MCF 10A (cell line): ENCODE measurements at regions of chr5 and their contacts with region 1.

Region 1: DNA sequence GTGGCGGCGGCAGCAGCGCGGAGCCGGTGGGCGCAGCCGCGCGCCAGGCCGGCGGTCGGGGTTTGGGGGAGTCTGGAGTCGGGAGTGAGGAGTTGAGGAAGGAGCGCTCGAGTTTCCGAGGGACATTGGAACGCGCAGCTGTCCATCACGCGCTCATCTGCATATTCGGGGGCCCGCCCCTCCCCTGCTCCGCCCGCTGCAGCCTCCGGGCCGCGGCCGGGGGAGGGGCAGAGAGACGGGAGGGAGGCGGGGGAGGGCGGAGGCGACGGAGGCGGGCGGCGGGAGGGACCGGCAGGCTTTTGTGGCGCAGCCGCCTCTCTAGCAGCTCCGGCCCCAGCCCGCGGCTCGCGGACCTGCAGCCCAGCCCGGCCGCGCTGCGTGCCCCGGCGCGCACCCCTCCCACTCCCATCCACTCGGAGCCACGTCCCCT is at the start of gene IRX2:
- DNase-seq: peak; percentile 97
- H3K4me3 Mint-ChIP-seq: peak within 1 kb of the TSS; percentile 82
- H3K27ac Mint-ChIP-seq: peak within 1 kb of the TSS; percentile 95
- H3K4me1 Mint-ChIP-seq: peaks cover 12% of the 10 kb centered on the region
- H3K27me3 Mint-ChIP-seq: no peaks in the 10 kb centered on the region
- CTCF ChIP-seq: no peak
- total RNA-seq, gene IRX2: 35.4 and 43.4 TPM in 2 replicates

Region 2: DNA sequence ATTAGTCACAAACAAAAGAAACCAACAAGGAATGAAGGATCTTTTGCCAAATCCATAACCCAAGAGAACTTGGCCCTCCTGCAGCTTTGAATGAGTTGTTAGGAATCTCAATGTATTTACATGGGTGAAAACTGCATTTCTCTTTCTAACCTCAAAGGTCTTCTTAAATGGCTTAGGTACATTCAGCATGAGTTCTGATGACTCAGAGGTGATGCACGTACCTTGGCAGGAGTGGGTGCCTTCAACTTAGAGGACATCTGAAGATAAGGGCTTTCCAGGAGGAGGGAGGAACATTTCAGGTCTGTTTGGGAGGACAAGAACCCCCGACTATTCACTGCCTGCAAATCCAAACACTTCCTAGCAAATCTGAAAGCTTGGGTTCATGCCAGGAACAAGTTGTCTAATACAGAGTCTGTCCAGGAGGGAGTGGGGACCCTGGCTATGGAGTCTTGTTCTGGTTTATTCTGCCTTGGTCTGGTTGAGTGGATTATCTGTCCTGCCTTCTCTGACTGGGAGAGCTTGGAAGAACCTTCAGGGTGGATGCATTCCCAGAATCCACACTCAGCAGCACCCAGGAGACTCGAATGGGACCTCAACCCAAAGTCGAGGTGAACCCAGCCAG is 65.8 kb before region 1 on chr5:
- CTCF ChIA-PET with region 1: interaction called, 3 read pairs
- POLR2A ChIA-PET with region 1: interaction called, 27 read pairs
- intact Hi-C with region 1: loop called (anchors 5 kb)
- DNase-seq: peak; percentile 96
- H3K4me3 Mint-ChIP-seq: peak overlapping the region; percentile 57
- H3K27ac Mint-ChIP-seq: peak overlapping the region; percentile 92
- H3K4me1 Mint-ChIP-seq: peaks cover 51% of the 10 kb centered on the region
- H3K27me3 Mint-ChIP-seq: no peaks in the 10 kb centered on the region
- CTCF ChIP-seq: no peak

Region 3: GRCh38 chr5:2780394-2781171 is 29.0 kb after region 1 on chr5:
- CTCF ChIA-PET with region 1: interaction called, 4 read pairs
- POLR2A ChIA-PET with region 1: interaction called, 6 read pairs
- intact Hi-C with region 1: loop called (anchors 1 kb)
- DNase-seq: peak; percentile 84
- H3K4me3 Mint-ChIP-seq: no peak overlapping the region
- H3K27ac Mint-ChIP-seq: no peak overlapping the region
- H3K4me1 Mint-ChIP-seq: peaks cover 10% of the 10 kb centered on the region
- H3K27me3 Mint-ChIP-seq: no peaks in the 10 kb centered on the region
- CTCF ChIP-seq: no peak

Region 4: DNA sequence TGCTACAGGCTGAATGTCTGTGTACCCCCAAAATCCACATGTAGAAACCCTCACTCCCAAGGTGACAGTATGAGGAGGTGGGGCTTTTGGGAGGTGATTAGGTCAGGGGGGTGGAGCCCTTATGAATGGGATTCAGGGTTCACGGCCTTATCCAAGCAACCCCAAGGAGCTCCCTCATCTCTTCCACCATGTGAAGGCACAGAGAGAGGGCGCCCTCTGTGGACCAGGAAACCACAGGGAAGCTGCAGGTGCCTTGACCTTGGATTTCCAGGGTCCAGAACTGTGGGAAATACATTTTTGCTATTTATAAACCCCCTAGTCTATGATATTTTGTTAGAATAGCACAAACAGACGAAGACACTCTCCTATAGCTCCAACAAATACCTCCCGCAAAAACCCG is 53.5 kb after region 1 on chr5:
- CTCF ChIA-PET with region 1: interaction called, 4 read pairs
- POLR2A ChIA-PET with region 1: interaction called, 3 read pairs
- intact Hi-C with region 1: loop called (anchors 1 kb)
- DNase-seq: peak; percentile 80
- H3K4me3 Mint-ChIP-seq: no peak overlapping the region
- H3K27ac Mint-ChIP-seq: no peak overlapping the region
- H3K4me1 Mint-ChIP-seq: no peaks in the 10 kb centered on the region
- H3K27me3 Mint-ChIP-seq: no peaks in the 10 kb centered on the region
- CTCF ChIP-seq: peak; percentile 35

Region 5: GRCh38 chr5:2833556-2833955 is 81.9 kb after region 1 on chr5:
- CTCF ChIA-PET with region 1: no interaction called
- POLR2A ChIA-PET with region 1: no interaction called
- intact Hi-C with region 1: no loop called
- DNase-seq: no peak
- H3K4me3 Mint-ChIP-seq: no peak overlapping the region
- H3K27ac Mint-ChIP-seq: no peak overlapping the region
- H3K4me1 Mint-ChIP-seq: no peaks in the 10 kb centered on the region
- H3K27me3 Mint-ChIP-seq: no peaks in the 10 kb centered on the region
- CTCF ChIP-seq: no peak

Region 6: DNA sequence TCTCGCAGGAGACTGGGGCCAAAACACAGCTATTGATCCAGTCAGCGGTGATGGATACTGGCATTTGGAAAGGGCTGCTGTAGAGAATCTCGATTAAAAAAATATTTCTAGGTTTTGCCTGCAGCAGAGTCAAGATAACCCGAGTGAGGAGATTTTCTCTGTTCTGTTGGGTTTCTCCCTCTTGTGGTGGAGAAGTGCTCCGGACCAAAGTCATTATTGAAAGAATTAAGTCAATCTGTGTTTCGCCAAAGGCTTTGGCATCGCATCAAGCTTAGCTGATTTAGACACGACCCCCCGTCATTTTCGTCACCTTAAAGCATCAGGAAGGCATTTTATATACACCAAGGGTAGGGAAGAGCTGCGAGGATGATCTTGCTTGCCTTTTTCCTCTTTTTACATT is 97.0 kb after region 1 on chr5:
- CTCF ChIA-PET with region 1: interaction called, 6 read pairs
- POLR2A ChIA-PET with region 1: interaction called, 16 read pairs
- intact Hi-C with region 1: loop called (anchors 2 kb)
- DNase-seq: peak; percentile 25
- H3K4me3 Mint-ChIP-seq: no peak overlapping the region
- H3K27ac Mint-ChIP-seq: no peak overlapping the region
- H3K4me1 Mint-ChIP-seq: peaks cover 5% of the 10 kb centered on the region
- H3K27me3 Mint-ChIP-seq: no peaks in the 10 kb centered on the region
- CTCF ChIP-seq: peak; percentile 14

Region 7: GRCh38 chr5:3310541-3311261 is 559.1 kb after region 1 on chr5:
- CTCF ChIA-PET with region 1: interaction called, 3 read pairs
- POLR2A ChIA-PET with region 1: interaction called, 27 read pairs
- intact Hi-C with region 1: loop called (anchors 1 kb)
- DNase-seq: peak; percentile 93
- H3K4me3 Mint-ChIP-seq: peak overlapping the region; percentile 65
- H3K27ac Mint-ChIP-seq: peak overlapping the region; percentile 97
- H3K4me1 Mint-ChIP-seq: peaks cover 24% of the 10 kb centered on the region
- H3K27me3 Mint-ChIP-seq: no peaks in the 10 kb centered on the region
- CTCF ChIP-seq: no peak